ENCODE measurements at regions of chr22 and their contacts with region 1.

Region 1: GRCh38 chr22:19756288-19757128 is 4.1 kb upstream of the TBX1 start:
- DNase-seq: peak; percentile 48
- H3K4me3 ChIP-seq: peak overlapping the region in 2 of 3 experiments; percentile 27 to 32
- H3K27ac ChIP-seq: no peak overlapping the region
- H3K4me1 ChIP-seq: peaks cover 16% of the 10 kb centered on the region
- H3K27me3 ChIP-seq: peaks cover 31% of the 10 kb centered on the region
- CTCF ChIP-seq: peak; percentile 44 to 75

Region 2: GRCh38 chr22:19806213-19807145 is 50.0 kb after region 1 on chr22:
- CTCF ChIA-PET with region 1: no interaction called
- dilution Hi-C with region 1: no loop called
- in situ Hi-C with region 1: loop called in 1 of 2 experiments (anchors 10 kb)
- intact Hi-C with region 1: no loop called
- DNase-seq: peak; percentile 86
- H3K4me3 ChIP-seq: no peak overlapping the region
- H3K27ac ChIP-seq: no peak overlapping the region
- H3K4me1 ChIP-seq: peaks cover 31% of the 10 kb centered on the region
- H3K27me3 ChIP-seq: no peaks in the 10 kb centered on the region
- CTCF ChIP-seq: no peak

Region 3: DNA sequence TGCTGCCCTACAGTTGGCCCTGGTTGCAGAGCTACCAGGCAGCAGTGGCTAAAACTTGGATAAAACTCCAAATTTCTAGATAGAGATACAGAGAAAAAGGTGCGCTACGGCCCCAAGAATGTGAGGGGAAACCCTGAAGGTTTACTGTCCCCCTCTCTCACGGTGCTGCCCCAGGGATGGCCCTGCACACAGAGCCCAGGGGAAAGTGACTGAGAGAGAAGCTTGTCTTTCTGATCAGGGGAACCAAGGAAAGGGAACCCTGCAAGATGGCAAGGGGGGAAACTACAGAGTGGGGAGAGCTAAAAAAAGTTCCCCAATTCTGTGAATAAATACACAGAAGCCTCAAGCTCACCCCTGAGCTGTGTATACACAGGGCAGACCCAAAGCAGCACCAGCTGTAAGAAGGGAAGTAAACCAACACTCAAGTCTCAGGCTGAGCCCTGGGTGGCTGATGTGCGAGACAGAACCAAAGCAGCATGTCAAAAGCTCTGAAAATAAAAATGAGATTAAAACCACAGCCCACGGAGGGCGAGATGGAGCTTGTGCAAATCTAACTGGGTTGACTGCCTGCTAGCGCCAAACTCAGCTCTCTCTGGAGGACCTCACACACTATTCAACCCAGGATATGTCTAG is 76.1 kb after region 1 on chr22:
- CTCF ChIA-PET with region 1: no interaction called
- dilution Hi-C with region 1: loop called (anchors 5 kb)
- in situ Hi-C with region 1: no loop called
- intact Hi-C with region 1: no loop called
- DNase-seq: no peak
- H3K4me3 ChIP-seq: no peak overlapping the region
- H3K27ac ChIP-seq: no peak overlapping the region
- H3K4me1 ChIP-seq: no peaks in the 10 kb centered on the region
- H3K27me3 ChIP-seq: no peaks in the 10 kb centered on the region
- CTCF ChIP-seq: no peak

Region 4: GRCh38 chr22:19909350-19910179 is 153.1 kb after region 1 on chr22:
- CTCF ChIA-PET with region 1: interaction called, 7 read pairs
- dilution Hi-C with region 1: no loop called
- in situ Hi-C with region 1: loop called in 1 of 2 experiments (anchors 10 kb)
- intact Hi-C with region 1: loop called (anchors 1 kb)
- DNase-seq: peak; percentile 47
- H3K4me3 ChIP-seq: no peak overlapping the region
- H3K27ac ChIP-seq: no peak overlapping the region
- H3K4me1 ChIP-seq: no peaks in the 10 kb centered on the region
- H3K27me3 ChIP-seq: no peaks in the 10 kb centered on the region
- CTCF ChIP-seq: peak; percentile 92 to 96

Region 5: GRCh38 chr22:20020533-20021195 is 264.2 kb after region 1 on chr22 and contains the start of gene TANGO2:
- CTCF ChIA-PET with region 1: no interaction called
- dilution Hi-C with region 1: loop called (anchors 5 kb)
- in situ Hi-C with region 1: no loop called
- intact Hi-C with region 1: no loop called
- DNase-seq: peak; percentile 89
- H3K4me3 ChIP-seq: peak within 1 kb of the TSS; percentile 82 to 90 (median 85)
- H3K27ac ChIP-seq: peak within 1 kb of the TSS; percentile 33
- H3K4me1 ChIP-seq: peaks cover 23% of the 10 kb centered on the region
- H3K27me3 ChIP-seq: no peaks in the 10 kb centered on the region
- CTCF ChIP-seq: no peak
- total RNA-seq, gene TANGO2: 22.5 to 45.7 TPM